Left cardiac atrium (tissue), 4 donors: ENCODE measurements at regions of chrX and their contacts with region 1.

Region 1: DNA sequence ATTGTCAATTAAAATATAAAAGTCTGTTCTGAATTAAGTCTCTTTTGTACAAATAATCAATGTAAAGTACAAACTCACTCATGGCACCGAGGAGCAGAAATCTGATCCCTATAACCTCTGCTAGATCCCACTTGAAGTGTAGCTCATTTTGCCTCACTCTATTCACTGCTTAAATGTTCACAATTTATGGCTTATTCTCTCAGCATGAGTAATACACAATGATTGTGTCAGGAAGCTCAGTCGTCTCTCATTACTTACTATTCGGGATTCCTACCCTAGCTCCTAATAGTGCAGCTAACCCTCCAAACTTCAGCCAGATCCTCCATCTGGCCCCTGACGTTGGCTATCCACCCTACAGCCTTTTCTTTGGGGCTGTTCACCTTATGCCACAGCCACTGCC is 4.7 kb upstream of the AMMECR1 start:
- DNase-seq: no peak
- ATAC-seq: no peak

Region 2: GRCh38 chrX:110123331-110123782 is 199.2 kb before region 1 on chrX:
- intact Hi-C with region 1: no loop called
- DNase-seq: no peak
- ATAC-seq: peak in 1 of 2 donors; percentile 32

Region 3: GRCh38 chrX:110167952-110168451 is 154.6 kb before region 1 on chrX:
- intact Hi-C with region 1: loop called in 1 of 2 experiments (anchors 10 kb)
- DNase-seq: no peak
- ATAC-seq: peak in 1 of 2 donors; percentile 21

Region 4: DNA sequence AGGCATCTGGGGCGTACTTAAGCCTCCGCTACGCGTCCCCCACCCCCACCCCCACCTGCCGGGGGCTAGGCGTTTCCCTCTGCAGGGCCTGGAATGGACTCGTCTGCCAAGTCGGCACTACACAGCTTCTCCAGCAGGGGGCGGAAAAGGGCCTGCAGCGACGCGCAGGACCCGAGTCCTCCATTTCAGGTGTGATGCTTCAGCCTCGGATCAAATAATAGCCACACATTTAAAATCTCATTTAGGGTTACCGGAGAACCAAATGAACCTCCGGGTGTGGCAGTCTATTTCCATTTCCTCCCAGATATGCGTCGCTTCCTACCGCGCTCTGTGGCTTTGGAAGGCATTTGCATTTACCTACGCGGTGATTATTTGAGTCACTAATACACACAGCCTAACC is 776.3 kb after region 1 on chrX:
- intact Hi-C with region 1: no loop called
- DNase-seq: peak; percentile 23
- ATAC-seq: no peak